Activated CD4-positive, alpha-beta T cell treated with anti-CD3 and anti-CD28 coated beads for 36 hours (primary cell): ENCODE measurements at regions of chr2 and their contacts with region 1.

Region 1: GRCh38 chr2:226835796-226836547 is at the start of gene RHBDD1:
- DNase-seq: peak; percentile 97
- ATAC-seq: peak; percentile 87
- H3K4me3 Mint-ChIP-seq: peak within 1 kb of the TSS; percentile 88
- H3K27ac Mint-ChIP-seq: peak within 1 kb of the TSS; percentile 95
- H3K4me1 Mint-ChIP-seq: peaks cover 54% of the 10 kb centered on the region
- H3K27me3 Mint-ChIP-seq: no peaks in the 10 kb centered on the region
- total RNA-seq, gene RHBDD1: 38.1 to 49.0 TPM

Region 2: GRCh38 chr2:225041851-225042799 is 1793.8 kb before region 1 on chr2 and contains the start of gene DOCK10:
- CTCF ChIA-PET with region 1: no interaction called
- POLR2A ChIA-PET with region 1: no interaction called
- intact Hi-C with region 1: loop called (anchors 5 to 10 kb)
- DNase-seq: peak; percentile 76
- ATAC-seq: peak; percentile 20
- H3K4me3 Mint-ChIP-seq: peak within 1 kb of the TSS; percentile 97
- H3K27ac Mint-ChIP-seq: peak within 1 kb of the TSS; percentile 98
- H3K4me1 Mint-ChIP-seq: peaks cover 50% of the 10 kb centered on the region
- H3K27me3 Mint-ChIP-seq: peaks cover 3% of the 10 kb centered on the region
- total RNA-seq, gene DOCK10: 177 to 196 TPM

Region 3: DNA sequence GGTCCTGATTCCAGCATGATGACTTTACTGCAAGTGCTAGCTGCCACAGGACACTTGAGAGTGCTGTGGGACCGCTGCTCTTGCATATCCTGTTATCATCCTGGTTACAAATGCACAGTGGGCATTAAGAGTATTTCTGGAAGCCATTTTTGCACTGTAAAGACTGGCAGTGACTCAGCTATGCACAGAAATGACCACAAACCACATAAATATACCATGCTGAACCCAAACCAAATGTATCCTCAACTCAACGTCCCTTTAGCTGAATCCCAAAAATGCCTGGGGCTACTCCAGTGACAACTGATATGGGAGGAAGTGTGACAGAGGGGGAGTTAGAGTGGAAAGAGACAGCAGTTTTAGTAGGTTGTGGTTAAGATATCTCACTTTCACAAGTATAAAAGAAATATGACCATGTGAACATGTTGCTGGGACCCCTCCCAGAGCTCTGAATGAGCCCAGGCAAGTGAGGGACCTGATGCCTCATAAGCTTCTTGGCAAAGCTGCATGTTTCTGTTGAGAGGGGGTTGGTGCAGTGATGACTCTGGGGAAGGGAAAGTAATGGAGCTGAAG is 37.2 kb after region 1 on chr2:
- CTCF ChIA-PET with region 1: no interaction called
- POLR2A ChIA-PET with region 1: interaction called, 13 read pairs
- intact Hi-C with region 1: loop called (anchors 1 kb)
- DNase-seq: peak; percentile 39
- ATAC-seq: peak; percentile 67
- H3K4me3 Mint-ChIP-seq: no peak overlapping the region
- H3K27ac Mint-ChIP-seq: peak overlapping the region; percentile 59
- H3K4me1 Mint-ChIP-seq: peaks cover 32% of the 10 kb centered on the region
- H3K27me3 Mint-ChIP-seq: no peaks in the 10 kb centered on the region

Region 4: GRCh38 chr2:226883296-226883795 is 47.4 kb after region 1 on chr2:
- CTCF ChIA-PET with region 1: no interaction called
- POLR2A ChIA-PET with region 1: no interaction called
- intact Hi-C with region 1: no loop called
- DNase-seq: no peak
- ATAC-seq: no peak
- H3K4me3 Mint-ChIP-seq: no peak overlapping the region
- H3K27ac Mint-ChIP-seq: no peak overlapping the region
- H3K4me1 Mint-ChIP-seq: peaks cover 9% of the 10 kb centered on the region
- H3K27me3 Mint-ChIP-seq: no peaks in the 10 kb centered on the region

Region 5: DNA sequence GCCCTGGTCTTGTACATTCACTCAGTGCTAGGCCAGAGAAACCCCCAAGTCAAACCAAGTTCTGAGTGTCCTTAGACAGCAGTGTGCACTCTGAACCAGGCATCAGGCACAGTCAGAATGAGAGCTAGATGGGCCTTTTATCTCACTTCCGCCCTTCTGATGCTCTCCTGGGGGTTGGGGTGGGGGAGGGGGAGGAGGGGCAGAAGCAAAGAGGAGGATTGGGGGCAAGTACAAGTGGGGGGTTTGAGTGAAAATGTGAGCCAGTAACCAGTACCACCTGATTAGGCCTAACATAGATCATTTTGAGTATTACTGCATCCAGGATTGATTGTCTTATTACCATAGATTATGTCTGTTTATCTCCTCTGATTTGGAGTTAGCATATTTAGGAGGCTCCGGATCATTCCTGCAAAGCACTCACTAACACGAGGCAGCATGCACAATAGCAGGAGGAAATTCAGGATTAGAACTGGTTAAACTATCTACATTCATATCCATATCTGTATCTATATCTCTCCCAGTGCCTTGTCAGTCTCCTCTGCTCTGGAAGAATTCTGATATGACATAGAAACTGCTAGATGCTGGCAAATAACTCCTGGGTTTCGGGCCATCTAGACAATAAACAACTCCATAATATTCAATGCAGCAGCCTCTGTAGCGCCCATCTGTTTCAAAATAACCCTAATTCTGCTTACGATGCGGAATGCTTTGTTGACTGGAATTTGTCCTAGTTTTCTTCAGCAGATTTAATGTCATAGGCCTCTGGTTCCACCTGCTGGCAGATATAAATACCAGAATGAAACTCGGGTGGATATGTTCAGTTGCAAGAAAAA is 149.0 kb after region 1 on chr2:
- CTCF ChIA-PET with region 1: interaction called, 4 read pairs
- POLR2A ChIA-PET with region 1: no interaction called
- intact Hi-C with region 1: loop called in 1 of 2 experiments (anchors 10 kb)
- DNase-seq: peak; percentile 49
- ATAC-seq: peak; percentile 96
- H3K4me3 Mint-ChIP-seq: no peak overlapping the region
- H3K27ac Mint-ChIP-seq: no peak overlapping the region
- H3K4me1 Mint-ChIP-seq: peaks cover 33% of the 10 kb centered on the region
- H3K27me3 Mint-ChIP-seq: no peaks in the 10 kb centered on the region

Region 6: DNA sequence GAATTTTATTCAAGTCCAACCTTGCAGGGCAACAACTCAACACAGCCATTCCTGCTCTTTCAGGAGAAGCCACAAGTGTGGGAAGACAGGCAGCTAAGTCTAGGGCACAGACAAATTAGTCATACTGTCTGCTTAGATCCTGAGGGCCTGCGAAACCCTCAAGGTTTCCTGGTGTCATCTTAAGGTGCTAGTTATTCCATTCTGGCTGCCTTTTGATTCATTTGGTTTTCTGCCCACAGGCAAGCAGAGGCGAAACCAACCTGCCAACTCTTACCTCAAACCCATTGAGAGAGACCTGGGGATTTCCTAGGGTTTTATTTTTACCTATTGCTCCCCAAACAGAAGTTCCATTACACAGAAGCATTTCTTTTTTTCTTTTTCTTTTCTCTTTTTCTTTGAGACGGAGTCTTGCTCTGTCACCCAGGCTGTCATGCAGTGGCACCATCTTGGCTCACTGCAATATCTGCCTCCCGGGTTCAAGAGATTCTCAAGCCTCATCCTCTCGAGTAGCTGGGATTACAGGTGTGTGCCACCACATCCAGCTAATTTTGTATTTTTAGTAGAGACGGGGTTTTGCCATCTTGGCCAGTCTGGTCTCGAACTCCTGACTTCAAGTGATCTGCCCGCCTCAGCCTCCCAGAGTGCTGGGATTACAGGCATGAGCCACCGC is 575.5 kb after region 1 on chr2:
- CTCF ChIA-PET with region 1: no interaction called
- POLR2A ChIA-PET with region 1: no interaction called
- intact Hi-C with region 1: loop called in 1 of 2 experiments (anchors 5 kb)
- DNase-seq: peak; percentile 80
- ATAC-seq: peak; percentile 87
- H3K4me3 Mint-ChIP-seq: peak overlapping the region; percentile 12
- H3K27ac Mint-ChIP-seq: peak overlapping the region; percentile 92
- H3K4me1 Mint-ChIP-seq: peaks cover 66% of the 10 kb centered on the region
- H3K27me3 Mint-ChIP-seq: no peaks in the 10 kb centered on the region